Calu3 (cell line): ENCODE measurements at regions of chr5 and their contacts with region 1.

Region 1: DNA sequence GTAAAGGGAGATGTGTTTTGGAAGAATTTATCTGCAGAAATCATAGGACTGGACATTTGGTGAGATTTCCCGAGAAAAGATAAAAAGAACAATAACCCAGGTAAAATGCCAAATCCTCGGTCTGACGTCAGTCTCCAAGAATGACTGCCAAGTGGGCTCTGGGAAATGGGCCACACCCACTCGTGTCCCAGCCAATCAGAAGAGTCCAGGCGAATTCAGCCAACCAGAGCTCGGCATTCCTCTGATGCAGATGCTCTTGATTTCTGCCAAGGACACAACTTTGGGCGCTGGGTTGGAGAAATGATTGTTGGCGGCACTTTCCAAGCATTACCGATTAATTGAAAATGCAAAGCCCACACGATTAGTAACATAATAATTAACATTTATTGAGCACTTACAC is 73.3 kb downstream of the FGF18 start:
- DNase-seq: no peak
- H3K4me3 Mint-ChIP-seq: no peak overlapping the region
- H3K27ac Mint-ChIP-seq: no peak overlapping the region
- H3K4me1 Mint-ChIP-seq: peaks cover 15% of the 10 kb centered on the region
- H3K27me3 Mint-ChIP-seq: peaks cover 32% of the 10 kb centered on the region
- CTCF ChIP-seq: no peak

Region 2: DNA sequence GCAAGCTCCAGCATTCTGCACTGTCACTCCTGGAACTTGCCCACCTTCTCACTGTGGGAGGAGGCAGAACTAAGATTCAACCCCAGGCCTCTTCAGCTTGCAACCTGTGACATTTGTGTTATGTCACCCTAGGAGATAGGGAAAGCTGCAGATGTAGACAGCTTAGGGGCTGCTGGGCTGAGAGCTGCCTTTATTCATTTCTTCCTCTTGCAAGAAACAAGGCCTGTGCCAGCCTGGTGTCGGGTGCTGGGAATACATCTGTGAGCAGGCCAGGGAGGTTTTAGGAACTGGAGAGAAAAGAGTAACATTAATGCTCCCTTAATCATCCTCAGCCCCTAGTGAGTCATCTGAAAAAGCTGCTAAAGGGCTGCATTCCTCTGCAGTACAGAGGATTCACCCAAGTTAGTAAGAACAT is 28.4 kb after region 1 on chr5:
- CTCF ChIA-PET with region 1: interaction called, 13 read pairs
- intact Hi-C with region 1: no loop called
- DNase-seq: peak; percentile 33
- H3K4me3 Mint-ChIP-seq: no peak overlapping the region
- H3K27ac Mint-ChIP-seq: no peak overlapping the region
- H3K4me1 Mint-ChIP-seq: peaks cover 7% of the 10 kb centered on the region
- H3K27me3 Mint-ChIP-seq: peaks cover 59% of the 10 kb centered on the region
- CTCF ChIP-seq: no peak